Heart left ventricle (tissue), 16 donors: ENCODE measurements at regions of chr3 and their contacts with region 1.

Region 1: DNA sequence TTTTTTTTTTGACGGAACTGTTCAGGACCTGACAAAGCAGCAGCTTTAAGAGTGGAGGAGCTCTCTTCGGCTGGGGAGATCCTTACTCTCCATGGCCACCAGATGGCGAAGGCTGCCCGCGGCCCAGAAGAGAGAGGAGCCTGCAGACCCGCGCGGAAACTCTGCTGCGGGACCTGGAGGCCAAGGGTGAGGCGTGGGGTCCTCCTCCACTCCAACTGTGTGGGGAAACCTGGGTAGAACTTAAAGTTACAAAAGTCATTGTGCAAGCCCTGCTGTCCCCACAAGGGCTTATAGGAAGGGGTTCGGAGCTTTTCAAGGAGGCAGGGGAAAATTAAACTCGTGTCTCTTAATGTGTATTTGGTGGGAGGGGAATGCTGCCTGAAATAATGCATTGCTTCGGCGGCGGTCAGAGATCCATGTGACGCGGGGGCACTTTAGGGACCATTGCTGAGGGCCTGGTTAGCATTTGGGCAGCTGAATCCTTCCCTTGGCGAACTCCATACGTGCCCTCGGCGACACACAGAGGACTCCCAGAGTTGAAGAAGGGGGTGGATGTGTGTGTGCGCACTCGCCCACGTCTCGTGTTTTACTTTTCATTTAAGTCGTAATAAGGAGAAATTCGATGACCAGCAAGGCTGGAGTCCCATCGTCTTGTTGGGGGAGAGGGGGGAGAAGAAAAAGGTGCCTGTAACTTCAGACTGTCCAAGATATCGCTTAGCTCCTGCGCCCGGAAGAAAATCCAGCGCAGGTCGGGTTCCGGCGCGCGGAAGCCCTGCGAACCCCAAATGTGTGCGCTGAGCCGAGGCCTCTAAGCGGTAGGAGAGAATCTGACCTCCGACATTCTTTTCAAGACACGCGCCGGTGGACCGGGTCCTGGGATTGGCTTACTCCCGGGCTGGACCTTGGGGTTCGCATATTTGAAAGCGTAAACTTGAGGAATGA is 9.7 kb downstream of the EOMES start:
- DNase-seq: peak; percentile 73 to 88 (median 75)
- ATAC-seq: peak; percentile 87 to 98 (median 96)
- H3K4me3 ChIP-seq: peak overlapping the region; percentile 15 to 72 (median 58)
- H3K27ac ChIP-seq: peak overlapping the region in 1 of 12 donors; percentile 65
- H3K4me1 ChIP-seq: peaks cover 0 to 33% (median 12%) of the 10 kb centered on the region in 12 donors
- H3K27me3 ChIP-seq: peaks cover 10 to 77% (median 39%) of the 10 kb centered on the region in 9 donors
- CTCF ChIP-seq: peak; percentile 63 to 85 (median 75)
- POLR2A ChIP-seq: no peak

Region 2: DNA sequence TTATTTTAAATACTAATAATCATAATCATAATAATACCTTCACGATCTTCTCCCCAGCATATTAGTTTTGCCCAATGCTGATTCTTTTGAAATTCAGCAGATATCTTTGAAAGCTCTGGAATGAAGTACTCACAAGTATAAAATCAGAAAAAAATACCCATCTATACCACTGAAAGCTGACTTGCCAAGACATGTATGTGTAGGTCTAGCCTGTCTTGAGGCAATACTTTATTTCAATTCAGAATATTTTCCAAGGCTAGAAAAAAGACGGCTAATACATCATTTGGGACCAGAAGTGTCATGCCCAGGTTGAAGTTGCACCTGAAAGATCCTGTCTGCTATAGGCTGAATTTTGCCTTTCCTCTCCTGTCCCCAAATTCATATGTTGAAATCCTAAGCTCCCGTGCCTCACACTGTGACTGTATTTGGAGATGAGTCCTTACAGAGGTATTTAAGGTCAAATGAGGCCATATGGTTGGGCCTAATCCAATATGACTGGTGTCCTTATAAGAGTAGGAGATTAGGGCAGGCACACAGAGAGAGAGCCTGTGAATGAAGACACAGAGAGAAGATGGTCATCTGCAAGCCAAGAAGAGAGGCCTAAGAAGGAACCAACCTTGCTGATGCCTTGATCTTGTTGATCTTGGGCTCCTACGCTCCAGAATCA is 273.1 kb after region 1 on chr3:
- intact Hi-C with region 1: no loop called
- DNase-seq: no peak
- ATAC-seq: peak in 1 of 4 donors; percentile 62
- H3K4me3 ChIP-seq: no peak overlapping the region
- H3K27ac ChIP-seq: no peak overlapping the region
- H3K4me1 ChIP-seq: no peaks in the 10 kb centered on the region
- H3K27me3 ChIP-seq: no peaks in the 10 kb centered on the region
- CTCF ChIP-seq: no peak
- POLR2A ChIP-seq: no peak

Region 3: DNA sequence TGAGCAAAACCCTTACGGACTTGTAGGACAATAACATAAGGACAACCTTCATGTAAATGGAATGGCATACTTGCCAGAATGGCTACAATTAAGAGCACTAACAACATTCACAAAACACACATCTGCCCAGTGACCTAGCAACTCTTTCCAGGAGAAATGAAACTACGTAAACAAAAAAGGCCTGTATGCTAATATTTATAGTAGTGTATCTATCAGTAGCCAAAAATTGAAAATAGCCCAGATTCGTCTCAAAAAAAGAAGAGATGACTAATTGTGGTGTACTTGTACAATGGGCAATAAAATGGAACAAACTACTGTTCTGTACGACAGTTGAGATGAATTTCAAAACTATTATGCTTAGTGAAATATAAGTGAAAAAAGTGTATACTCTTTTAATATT is 567.4 kb after region 1 on chr3:
- intact Hi-C with region 1: loop called in 3 of 10 experiments (anchors 5 to 10 kb)
- DNase-seq: no peak
- ATAC-seq: no peak
- H3K4me3 ChIP-seq: no peak overlapping the region
- H3K27ac ChIP-seq: no peak overlapping the region
- H3K4me1 ChIP-seq: peaks cover 0 to 10% (median 0%) of the 10 kb centered on the region in 12 donors
- H3K27me3 ChIP-seq: no peaks in the 10 kb centered on the region
- CTCF ChIP-seq: no peak
- POLR2A ChIP-seq: no peak

Region 4: GRCh38 chr3:28286595-28286994 is 574.2 kb after region 1 on chr3:
- intact Hi-C with region 1: loop called in 6 of 10 experiments (anchors 1 to 10 kb)
- DNase-seq: no peak
- ATAC-seq: peak in 3 of 4 donors; percentile 72 to 82 (median 82)
- H3K4me3 ChIP-seq: no peak overlapping the region
- H3K27ac ChIP-seq: no peak overlapping the region
- H3K4me1 ChIP-seq: peaks cover 0 to 6% (median 0%) of the 10 kb centered on the region in 12 donors
- H3K27me3 ChIP-seq: no peaks in the 10 kb centered on the region
- CTCF ChIP-seq: peak; percentile 34 to 64 (median 53)
- POLR2A ChIP-seq: no peak

Region 5: GRCh38 chr3:28295898-28296490 is 583.6 kb after region 1 on chr3:
- intact Hi-C with region 1: loop called in 1 of 10 experiments (anchors 10 kb)
- DNase-seq: no peak
- ATAC-seq: no peak
- H3K4me3 ChIP-seq: peak overlapping the region in 9 of 12 donors; percentile 17 to 45 (median 25)
- H3K27ac ChIP-seq: peak overlapping the region in 4 of 12 donors; percentile 2 to 67 (median 12)
- H3K4me1 ChIP-seq: peaks cover 0 to 21% (median 0%) of the 10 kb centered on the region in 12 donors
- H3K27me3 ChIP-seq: no peaks in the 10 kb centered on the region
- CTCF ChIP-seq: no peak
- POLR2A ChIP-seq: no peak

Region 6: DNA sequence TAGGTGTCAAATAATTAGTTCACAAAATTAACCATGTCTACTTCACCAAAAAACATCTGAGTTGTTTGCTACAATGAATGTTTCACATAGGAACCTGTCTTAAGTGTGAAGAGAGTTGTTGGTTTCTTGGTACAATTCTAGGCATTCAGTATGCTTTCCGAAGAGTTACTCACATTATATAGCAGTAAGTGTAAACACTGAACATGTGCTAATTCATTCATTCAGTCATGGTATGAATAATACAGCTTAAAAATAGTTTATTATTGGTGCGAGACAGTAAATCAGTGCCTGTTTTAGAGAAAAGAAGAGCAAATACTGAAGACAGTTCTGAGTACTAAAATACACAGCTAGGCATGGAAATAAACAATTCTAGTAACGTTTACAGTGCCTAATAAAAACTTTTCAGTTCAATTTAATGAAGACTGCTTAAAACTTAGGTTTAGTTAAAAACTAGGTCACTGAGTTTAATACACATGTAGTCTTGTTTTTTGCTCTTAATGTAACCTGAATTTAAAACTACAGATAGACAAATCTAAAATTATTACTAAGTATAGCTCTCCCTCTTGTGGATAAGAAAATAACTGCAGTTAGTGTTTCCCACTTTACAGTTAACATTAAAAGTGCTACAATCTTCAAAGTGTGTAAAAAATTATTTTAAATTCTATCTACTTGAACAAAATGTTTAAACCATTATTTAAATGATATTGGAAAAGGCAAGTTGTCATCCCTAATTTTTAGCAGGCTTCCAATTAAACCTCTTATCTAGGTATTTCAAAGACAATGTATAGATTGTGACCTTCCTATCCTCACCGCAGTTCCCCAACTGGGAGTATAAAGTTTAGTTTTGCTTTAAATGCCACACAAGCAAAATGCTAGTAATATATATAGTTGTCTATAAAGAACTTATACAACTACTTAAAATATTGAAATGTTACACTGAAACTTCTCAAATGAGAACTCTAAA is 616.1 kb after region 1 on chr3:
- intact Hi-C with region 1: loop called (anchors 1 to 10 kb)
- DNase-seq: no peak
- ATAC-seq: no peak
- H3K4me3 ChIP-seq: no peak overlapping the region
- H3K27ac ChIP-seq: no peak overlapping the region
- H3K4me1 ChIP-seq: peaks cover 0 to 16% (median 0%) of the 10 kb centered on the region in 12 donors
- H3K27me3 ChIP-seq: no peaks in the 10 kb centered on the region
- CTCF ChIP-seq: peak; percentile 61 to 82 (median 75)
- POLR2A ChIP-seq: no peak

Region 7: GRCh38 chr3:28334552-28334951 is 622.1 kb after region 1 on chr3:
- intact Hi-C with region 1: loop called in 9 of 10 experiments (anchors 2 to 10 kb)
- DNase-seq: no peak
- ATAC-seq: no peak
- H3K4me3 ChIP-seq: no peak overlapping the region
- H3K27ac ChIP-seq: no peak overlapping the region
- H3K4me1 ChIP-seq: no peaks in the 10 kb centered on the region
- H3K27me3 ChIP-seq: no peaks in the 10 kb centered on the region
- CTCF ChIP-seq: peak in 9 of 12 donors; percentile 6 to 37 (median 22)
- POLR2A ChIP-seq: no peak